ENCODE measurements at regions of chr10 and their contacts with region 1.

Region 1: DNA sequence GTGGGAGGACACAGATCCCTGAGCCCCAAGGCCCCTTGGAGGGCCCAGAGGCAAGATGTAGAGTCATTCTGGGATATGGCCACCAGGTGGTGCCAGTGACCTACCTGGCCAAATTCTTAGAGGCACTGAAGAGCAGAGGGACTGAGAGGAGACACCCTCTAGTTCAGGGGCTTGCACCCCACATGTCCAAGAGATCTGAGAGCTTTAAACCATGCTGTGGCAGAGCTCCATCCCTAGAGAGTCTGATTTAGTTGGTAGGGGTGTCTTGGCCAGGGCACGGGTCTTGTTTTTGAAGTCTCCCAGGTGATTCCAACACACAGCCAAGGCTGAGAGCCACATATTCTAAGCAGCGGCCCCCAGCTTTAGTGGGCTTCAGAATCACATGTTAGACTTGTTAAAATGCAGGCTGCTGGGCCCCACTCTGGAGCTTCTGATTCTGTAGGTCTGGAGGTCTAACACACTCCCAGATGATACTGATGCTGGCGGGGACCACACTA is 52.5 kb downstream of the PRF1 start:
- DNase-seq: peak; percentile 62 to 89 (median 80)
- ATAC-seq: peak; percentile 97
- H3K4me3 ChIP-seq: no peak overlapping the region
- H3K4me3 Mint-ChIP-seq: no peak overlapping the region
- H3K27ac ChIP-seq: no peak overlapping the region
- H3K27ac Mint-ChIP-seq: no peak overlapping the region
- H3K4me1 ChIP-seq: no peaks in the 10 kb centered on the region
- H3K4me1 Mint-ChIP-seq: peaks cover 1% of the 10 kb centered on the region
- H3K27me3 ChIP-seq: no peaks in the 10 kb centered on the region
- H3K27me3 Mint-ChIP-seq: no peaks in the 10 kb centered on the region
- CTCF ChIP-seq: peak; percentile 89

Region 2: GRCh38 chr10:70672165-70673042 is 122.4 kb after region 1 on chr10 and contains the start of gene ADAMTS14:
- CTCF ChIA-PET with region 1: interaction called, 4 read pairs
- POLR2A ChIA-PET with region 1: no interaction called
- intact Hi-C with region 1: loop called in 1 of 2 experiments (anchors 10 kb)
- DNase-seq: peak in 4 of 9 experiments; percentile 2 to 46 (median 28)
- ATAC-seq: peak; percentile 29
- H3K4me3 ChIP-seq: peak within 1 kb of the TSS in 1 of 2 experiments; percentile 26
- H3K4me3 Mint-ChIP-seq: peak within 1 kb of the TSS; percentile 68
- H3K27ac ChIP-seq: no peak within 1 kb of the TSS
- H3K27ac Mint-ChIP-seq: no peak within 1 kb of the TSS
- H3K4me1 ChIP-seq: peaks cover 3% of the 10 kb centered on the region
- H3K4me1 Mint-ChIP-seq: peaks cover 12% of the 10 kb centered on the region
- H3K27me3 ChIP-seq: peaks cover 4% of the 10 kb centered on the region in 2 experiments
- H3K27me3 Mint-ChIP-seq: peaks cover 38% of the 10 kb centered on the region
- CTCF ChIP-seq: no peak
- total RNA-seq, gene ADAMTS14: not detected

Region 3: DNA sequence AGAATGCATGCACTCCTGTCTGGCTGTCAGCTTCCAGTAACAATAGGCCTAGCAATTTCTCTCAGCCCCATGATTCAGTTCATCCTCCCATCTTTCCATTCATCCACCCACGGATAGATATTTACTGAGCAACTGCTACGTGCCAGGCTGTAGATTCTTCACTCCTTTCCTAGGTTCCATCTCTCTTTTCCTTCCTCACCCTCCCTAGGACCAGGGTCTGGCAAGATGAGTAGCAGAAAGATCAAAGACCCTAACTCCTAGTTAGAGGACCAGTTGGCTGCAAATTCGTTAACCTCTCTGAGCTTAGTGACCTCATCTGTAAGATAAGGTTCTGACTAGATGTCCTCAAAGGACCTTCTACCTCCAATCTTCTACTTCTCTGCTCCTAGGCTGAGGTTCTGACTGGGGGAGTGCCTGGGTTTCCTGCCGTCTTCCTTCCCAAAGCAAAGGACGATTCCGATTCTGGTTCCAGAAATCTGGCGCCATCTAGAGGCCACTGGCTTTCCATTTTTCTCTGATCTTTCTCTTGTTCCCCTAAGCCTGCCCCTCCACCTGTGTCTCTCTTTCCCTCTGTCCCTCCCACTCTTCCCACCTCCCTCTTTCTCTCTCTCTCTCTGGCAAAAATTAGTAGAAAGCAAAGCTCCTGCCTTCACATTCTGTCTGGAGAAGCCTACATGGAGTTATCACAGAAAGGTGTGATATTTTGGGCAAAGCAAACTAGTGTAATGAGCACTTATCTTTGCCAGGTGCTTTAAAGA is 208.9 kb after region 1 on chr10:
- CTCF ChIA-PET with region 1: interaction called, 215 read pairs
- POLR2A ChIA-PET with region 1: interaction called, 3 read pairs
- intact Hi-C with region 1: loop called (anchors 1 kb)
- DNase-seq: peak; percentile 42 to 84 (median 72)
- ATAC-seq: peak; percentile 62
- H3K4me3 ChIP-seq: no peak overlapping the region
- H3K4me3 Mint-ChIP-seq: no peak overlapping the region
- H3K27ac ChIP-seq: no peak overlapping the region
- H3K27ac Mint-ChIP-seq: no peak overlapping the region
- H3K4me1 ChIP-seq: no peaks in the 10 kb centered on the region
- H3K4me1 Mint-ChIP-seq: peaks cover 7% of the 10 kb centered on the region
- H3K27me3 ChIP-seq: no peaks in the 10 kb centered on the region
- H3K27me3 Mint-ChIP-seq: no peaks in the 10 kb centered on the region
- CTCF ChIP-seq: peak; percentile 83

Region 4: GRCh38 chr10:70815504-70816219 is 265.7 kb after region 1 on chr10 and contains the start of gene SGPL1:
- CTCF ChIA-PET with region 1: interaction called, 7 read pairs
- POLR2A ChIA-PET with region 1: no interaction called
- intact Hi-C with region 1: loop called in 1 of 2 experiments (anchors 1 kb)
- DNase-seq: peak; percentile 70 to 93 (median 85)
- ATAC-seq: peak; percentile 94
- H3K4me3 ChIP-seq: peak within 1 kb of the TSS; percentile 48 to 75
- H3K4me3 Mint-ChIP-seq: peak within 1 kb of the TSS; percentile 93
- H3K27ac ChIP-seq: peak within 1 kb of the TSS; percentile 26 to 65
- H3K27ac Mint-ChIP-seq: peak within 1 kb of the TSS; percentile 94
- H3K4me1 ChIP-seq: peaks cover 19% of the 10 kb centered on the region
- H3K4me1 Mint-ChIP-seq: peaks cover 32% of the 10 kb centered on the region
- H3K27me3 ChIP-seq: no peaks in the 10 kb centered on the region
- H3K27me3 Mint-ChIP-seq: no peaks in the 10 kb centered on the region
- CTCF ChIP-seq: peak; percentile 95
- total RNA-seq, gene SGPL1: 14.5 to 15.5 TPM

Region 5: GRCh38 chr10:70874045-70874444 is 324.0 kb after region 1 on chr10:
- CTCF ChIA-PET with region 1: interaction called, 65 read pairs
- POLR2A ChIA-PET with region 1: no interaction called
- intact Hi-C with region 1: no loop called
- DNase-seq: no peak
- ATAC-seq: no peak
- H3K4me3 ChIP-seq: no peak overlapping the region
- H3K4me3 Mint-ChIP-seq: no peak overlapping the region
- H3K27ac ChIP-seq: no peak overlapping the region
- H3K27ac Mint-ChIP-seq: no peak overlapping the region
- H3K4me1 ChIP-seq: no peaks in the 10 kb centered on the region
- H3K4me1 Mint-ChIP-seq: no peaks in the 10 kb centered on the region
- H3K27me3 ChIP-seq: no peaks in the 10 kb centered on the region
- H3K27me3 Mint-ChIP-seq: no peaks in the 10 kb centered on the region
- CTCF ChIP-seq: no peak

Region 6: DNA sequence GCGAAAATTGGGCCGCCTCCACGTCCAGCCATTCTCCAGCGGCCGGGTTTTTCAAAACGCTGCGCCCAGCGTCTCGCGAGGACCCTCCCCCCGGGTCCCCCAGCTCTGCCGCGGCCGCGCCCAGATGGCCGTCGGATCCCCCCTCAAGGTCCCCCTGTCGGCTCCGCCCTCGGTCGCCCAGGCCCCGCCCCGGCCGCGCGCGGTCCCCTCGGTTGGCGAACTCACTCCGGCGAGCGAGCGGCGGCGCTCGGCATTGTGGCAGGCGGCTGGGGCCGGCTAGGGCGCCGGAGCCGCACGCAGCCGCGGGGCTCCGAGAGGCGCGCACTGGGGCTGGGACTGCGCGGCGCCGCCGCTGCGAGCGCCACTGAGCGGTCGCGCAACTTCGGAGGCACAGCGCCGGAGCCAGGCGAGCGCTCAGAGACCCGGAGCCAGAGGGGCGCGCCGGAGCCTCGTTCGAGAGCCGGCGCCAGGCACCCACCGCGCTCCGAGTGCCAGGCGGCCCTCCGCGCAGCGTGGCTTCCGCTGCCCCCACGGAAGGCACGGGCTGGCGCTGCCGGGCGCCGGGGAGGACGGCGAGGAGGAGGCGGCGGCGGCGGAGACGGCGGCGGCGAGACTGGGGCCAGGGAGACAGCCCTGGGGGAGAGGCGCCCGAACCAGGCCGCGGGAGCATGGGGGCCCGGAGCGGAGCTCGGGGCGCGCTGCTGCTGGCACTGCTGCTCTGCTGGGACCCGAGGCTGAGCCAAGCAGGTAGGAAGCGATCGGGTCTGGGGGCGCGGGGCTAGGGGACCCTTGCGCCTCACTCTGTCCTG is 662.5 kb after region 1 on chr10 and contains the start of gene UNC5B:
- CTCF ChIA-PET with region 1: no interaction called
- POLR2A ChIA-PET with region 1: no interaction called
- intact Hi-C with region 1: loop called in 1 of 2 experiments (anchors 5 kb)
- DNase-seq: peak; percentile 16 to 68 (median 51)
- ATAC-seq: peak; percentile 79
- H3K4me3 ChIP-seq: peak within 1 kb of the TSS; percentile 34 to 45
- H3K4me3 Mint-ChIP-seq: peak within 1 kb of the TSS; percentile 77
- H3K27ac ChIP-seq: no peak within 1 kb of the TSS
- H3K27ac Mint-ChIP-seq: no peak within 1 kb of the TSS
- H3K4me1 ChIP-seq: no peaks in the 10 kb centered on the region
- H3K4me1 Mint-ChIP-seq: peaks cover 18% of the 10 kb centered on the region
- H3K27me3 ChIP-seq: peaks cover 10 to 11% of the 10 kb centered on the region in 2 experiments
- H3K27me3 Mint-ChIP-seq: peaks cover 48% of the 10 kb centered on the region
- CTCF ChIP-seq: no peak
- total RNA-seq, gene UNC5B: 0.08 TPM